PC-3 (cell line): ENCODE measurements at regions of chr9 and their contacts with region 1.

Region 1: GRCh38 chr9:77851882-77852595 is 179.6 kb downstream of the GNAQ start:
- DNase-seq: no peak
- ATAC-seq: no peak
- H3K4me3 ChIP-seq: no peak overlapping the region
- H3K27ac ChIP-seq: no peak overlapping the region
- H3K4me1 ChIP-seq: peaks cover 7% of the 10 kb centered on the region
- H3K27me3 ChIP-seq: no peaks in the 10 kb centered on the region
- CTCF ChIP-seq: no peak

Region 2: DNA sequence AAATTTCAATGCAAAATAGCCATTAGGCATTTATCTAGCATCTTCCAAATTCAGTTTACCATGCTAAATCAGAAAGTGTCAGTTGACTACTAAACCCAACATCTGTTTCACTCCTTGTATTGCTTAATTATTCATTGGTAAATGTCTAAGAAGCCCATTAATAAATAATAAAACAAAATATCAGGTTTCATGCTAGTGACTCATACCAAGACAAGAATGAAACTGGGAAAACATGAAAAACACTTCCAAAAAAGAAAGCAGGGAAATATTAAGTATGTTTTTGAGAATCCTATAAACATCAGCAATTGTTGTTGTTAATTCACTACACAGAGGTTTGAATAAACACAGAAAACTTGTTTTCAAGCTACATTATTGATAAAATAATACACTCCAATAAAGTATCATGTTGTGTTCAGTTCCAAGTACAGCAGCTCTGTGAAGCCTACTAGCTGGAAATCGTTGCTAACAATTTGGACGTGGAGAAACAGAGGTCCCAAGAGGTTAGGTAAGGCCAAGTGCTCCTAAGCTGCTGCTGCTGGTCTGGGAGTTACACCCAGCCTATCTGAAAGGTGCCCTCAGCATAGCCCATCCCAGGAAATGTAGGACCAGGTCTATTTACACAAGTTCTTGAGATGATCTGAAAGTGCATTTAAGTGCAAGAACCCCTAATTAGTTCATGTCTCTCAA is 100.7 kb after region 1 on chr9:
- CTCF ChIA-PET with region 1: interaction called, 3 read pairs
- POLR2A ChIA-PET with region 1: no interaction called
- intact Hi-C with region 1: loop called (anchors 10 kb)
- DNase-seq: peak; percentile 39
- ATAC-seq: no peak
- H3K4me3 ChIP-seq: no peak overlapping the region
- H3K27ac ChIP-seq: no peak overlapping the region
- H3K4me1 ChIP-seq: peaks cover 22% of the 10 kb centered on the region
- H3K27me3 ChIP-seq: no peaks in the 10 kb centered on the region
- CTCF ChIP-seq: no peak